ENCODE measurements at regions of chr12 and their contacts with region 1.

Region 1: GRCh38 chr12:131628025-131628875 is 82.6 kb upstream of the SFSWAP start:
- DNase-seq: no peak
- H3K4me3 ChIP-seq: no peak overlapping the region
- H3K27ac ChIP-seq: no peak overlapping the region
- H3K4me1 ChIP-seq: no peaks in the 10 kb centered on the region
- H3K27me3 ChIP-seq: peaks cover 15% of the 10 kb centered on the region
- CTCF ChIP-seq: no peak
- EP300 ChIP-seq: no peak
- POLR2A ChIP-seq: no peak

Region 2: DNA sequence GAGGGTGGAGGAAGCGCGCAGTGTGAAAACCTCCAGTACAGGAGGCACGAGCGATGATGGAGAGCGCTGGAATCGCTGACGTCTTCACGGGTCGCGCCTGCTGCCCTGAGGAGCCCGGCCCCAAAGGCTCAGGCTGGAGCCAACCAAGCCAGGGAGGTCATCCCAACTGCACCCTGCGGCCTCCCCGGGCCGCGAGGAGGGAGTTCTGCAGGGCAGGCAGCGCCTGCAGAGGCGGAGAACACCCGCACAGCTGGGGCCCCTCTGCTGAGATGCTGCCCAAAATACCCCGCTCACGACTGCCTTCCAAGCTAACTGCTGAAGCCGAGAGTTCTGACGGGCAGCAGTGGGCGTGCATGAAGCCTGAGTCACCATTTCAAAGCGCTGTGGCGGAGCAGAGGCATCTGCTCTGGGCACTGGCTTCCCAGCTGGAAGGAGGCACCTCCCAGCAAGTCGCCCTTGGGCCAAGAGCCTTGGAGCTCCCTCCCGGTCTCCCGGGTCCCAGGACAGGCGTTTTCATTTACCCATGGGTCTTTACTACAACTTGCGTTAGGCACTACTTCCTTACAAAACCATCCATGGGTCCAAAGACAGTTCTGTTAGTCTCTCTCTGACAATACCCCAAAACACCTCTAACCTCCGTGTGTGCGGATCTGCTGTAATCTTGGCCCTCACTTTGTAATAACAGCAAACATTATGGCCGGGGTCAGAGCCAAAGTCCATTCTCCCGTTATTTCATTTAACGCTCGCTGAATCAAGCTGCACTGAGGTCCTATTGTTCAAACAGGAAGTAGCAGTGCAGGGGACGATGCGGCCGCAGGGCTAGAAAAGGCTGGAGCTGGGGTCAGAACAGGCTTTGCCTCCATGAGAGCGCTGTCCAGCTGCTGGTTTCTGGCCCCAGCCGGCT is 852.0 kb before region 1 on chr12:
- in situ Hi-C with region 1: no loop called
- intact Hi-C with region 1: no loop called
- DNase-seq: peak; percentile 29
- H3K4me3 ChIP-seq: peak overlapping the region in 3 of 4 donors; percentile 2 to 39 (median 3)
- H3K27ac ChIP-seq: peak overlapping the region in 1 of 4 donors; percentile 12
- H3K4me1 ChIP-seq: peaks cover 0 to 14% (median 12%) of the 10 kb centered on the region in 4 donors
- H3K27me3 ChIP-seq: peaks cover 8% of the 10 kb centered on the region
- CTCF ChIP-seq: no peak
- EP300 ChIP-seq: no peak
- POLR2A ChIP-seq: no peak

Region 3: GRCh38 chr12:131323879-131324278 is 304.4 kb before region 1 on chr12:
- in situ Hi-C with region 1: no loop called
- intact Hi-C with region 1: no loop called
- DNase-seq: no peak
- H3K4me3 ChIP-seq: no peak overlapping the region
- H3K27ac ChIP-seq: no peak overlapping the region
- H3K4me1 ChIP-seq: no peaks in the 10 kb centered on the region
- H3K27me3 ChIP-seq: no peaks in the 10 kb centered on the region
- CTCF ChIP-seq: no peak
- EP300 ChIP-seq: no peak
- POLR2A ChIP-seq: no peak

Region 4: DNA sequence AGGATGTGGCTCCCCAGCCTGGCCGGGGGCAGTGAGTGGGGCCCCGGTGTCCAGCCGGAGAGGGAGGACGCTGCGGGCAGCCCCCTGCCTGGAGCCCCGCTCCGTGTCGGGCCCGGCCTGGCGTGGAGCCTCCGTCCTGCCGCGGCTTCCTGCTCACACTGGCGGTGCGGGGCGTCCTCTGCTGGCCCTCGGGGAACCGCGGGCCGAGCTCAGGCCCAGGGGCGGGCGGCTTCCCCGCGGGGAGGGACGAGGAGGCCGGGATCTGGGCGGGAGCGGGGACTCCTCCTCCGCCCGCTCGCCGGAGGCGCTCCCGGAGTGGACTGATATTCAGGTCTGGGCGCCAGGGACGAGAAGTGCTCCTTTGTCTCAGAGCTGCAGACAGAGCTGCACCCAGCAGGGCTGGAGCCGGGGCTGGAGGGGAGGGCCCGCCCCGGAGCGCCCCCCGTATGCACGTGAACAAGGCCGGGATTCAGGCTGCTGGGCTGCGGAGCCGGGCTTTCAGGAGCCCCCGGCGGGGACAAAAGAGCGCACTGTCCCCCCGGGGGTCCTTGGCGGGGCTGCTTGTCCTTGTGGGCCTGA is 202.2 kb after region 1 on chr12:
- in situ Hi-C with region 1: no loop called
- intact Hi-C with region 1: no loop called
- DNase-seq: peak; percentile 62
- H3K4me3 ChIP-seq: peak overlapping the region; percentile 10 to 49 (median 35)
- H3K27ac ChIP-seq: peak overlapping the region; percentile 64 to 79 (median 73)
- H3K4me1 ChIP-seq: peaks cover 11 to 45% (median 35%) of the 10 kb centered on the region in 4 donors
- H3K27me3 ChIP-seq: peaks cover 77% of the 10 kb centered on the region
- CTCF ChIP-seq: peak in 4 of 5 experiments; percentile 31 to 53 (median 44)
- EP300 ChIP-seq: no peak
- POLR2A ChIP-seq: peak; percentile 23

Region 5: DNA sequence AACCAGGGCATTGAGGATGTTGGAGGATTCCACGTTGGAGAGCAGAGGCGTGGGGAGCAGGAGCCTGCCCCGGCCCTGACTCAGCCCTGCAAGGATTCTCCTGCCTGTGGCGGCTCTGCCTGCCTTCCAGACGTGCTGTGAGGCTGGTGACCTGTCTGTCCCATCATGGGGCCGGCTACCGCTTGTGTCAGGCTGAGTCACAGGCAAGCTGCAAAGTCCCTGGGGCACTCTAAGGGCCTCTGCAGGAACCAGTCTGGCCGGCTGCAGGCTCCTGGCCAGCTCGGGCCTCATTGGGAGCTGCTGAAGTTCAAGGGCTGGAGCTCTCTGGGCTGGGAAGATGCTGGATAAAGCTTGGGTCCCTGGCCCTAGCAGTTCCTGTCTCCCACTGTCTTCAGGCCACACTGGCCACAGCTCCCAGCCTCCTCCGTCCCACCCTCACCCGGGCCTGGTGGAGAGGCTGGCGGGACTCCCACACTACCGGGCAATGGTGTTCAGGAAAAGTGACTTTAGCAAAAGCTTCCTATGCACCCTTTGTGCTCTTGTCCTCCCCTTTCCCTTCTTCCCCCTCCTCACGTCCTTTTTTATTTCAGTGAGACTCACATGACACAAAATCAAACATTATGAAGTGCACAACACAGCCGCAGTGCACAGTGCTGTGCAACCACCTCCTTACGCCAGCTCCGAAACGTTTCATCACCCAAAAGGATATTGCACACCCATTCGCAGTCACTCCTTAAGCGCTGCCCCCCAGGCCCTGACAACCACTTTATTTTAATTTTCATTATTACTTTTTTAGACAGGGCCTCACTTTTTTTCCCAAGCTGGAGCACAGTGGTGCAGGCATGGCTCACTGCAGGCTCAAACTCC is 244.2 kb after region 1 on chr12:
- in situ Hi-C with region 1: no loop called
- intact Hi-C with region 1: loop called (anchors 5 kb)
- DNase-seq: no peak
- H3K4me3 ChIP-seq: no peak overlapping the region
- H3K27ac ChIP-seq: no peak overlapping the region
- H3K4me1 ChIP-seq: no peaks in the 10 kb centered on the region
- H3K27me3 ChIP-seq: no peaks in the 10 kb centered on the region
- CTCF ChIP-seq: no peak
- EP300 ChIP-seq: no peak
- POLR2A ChIP-seq: no peak

Region 6: GRCh38 chr12:132046561-132046960 is 418.3 kb after region 1 on chr12:
- in situ Hi-C with region 1: no loop called
- intact Hi-C with region 1: no loop called
- DNase-seq: no peak
- H3K4me3 ChIP-seq: no peak overlapping the region
- H3K27ac ChIP-seq: peak overlapping the region in 1 of 4 donors; percentile 51
- H3K4me1 ChIP-seq: no peaks in the 10 kb centered on the region
- H3K27me3 ChIP-seq: no peaks in the 10 kb centered on the region
- CTCF ChIP-seq: no peak
- EP300 ChIP-seq: no peak
- POLR2A ChIP-seq: no peak